Adrenal gland (tissue), 19 donors: ENCODE measurements at regions of chr10 and their contacts with region 1.

Region 1: DNA sequence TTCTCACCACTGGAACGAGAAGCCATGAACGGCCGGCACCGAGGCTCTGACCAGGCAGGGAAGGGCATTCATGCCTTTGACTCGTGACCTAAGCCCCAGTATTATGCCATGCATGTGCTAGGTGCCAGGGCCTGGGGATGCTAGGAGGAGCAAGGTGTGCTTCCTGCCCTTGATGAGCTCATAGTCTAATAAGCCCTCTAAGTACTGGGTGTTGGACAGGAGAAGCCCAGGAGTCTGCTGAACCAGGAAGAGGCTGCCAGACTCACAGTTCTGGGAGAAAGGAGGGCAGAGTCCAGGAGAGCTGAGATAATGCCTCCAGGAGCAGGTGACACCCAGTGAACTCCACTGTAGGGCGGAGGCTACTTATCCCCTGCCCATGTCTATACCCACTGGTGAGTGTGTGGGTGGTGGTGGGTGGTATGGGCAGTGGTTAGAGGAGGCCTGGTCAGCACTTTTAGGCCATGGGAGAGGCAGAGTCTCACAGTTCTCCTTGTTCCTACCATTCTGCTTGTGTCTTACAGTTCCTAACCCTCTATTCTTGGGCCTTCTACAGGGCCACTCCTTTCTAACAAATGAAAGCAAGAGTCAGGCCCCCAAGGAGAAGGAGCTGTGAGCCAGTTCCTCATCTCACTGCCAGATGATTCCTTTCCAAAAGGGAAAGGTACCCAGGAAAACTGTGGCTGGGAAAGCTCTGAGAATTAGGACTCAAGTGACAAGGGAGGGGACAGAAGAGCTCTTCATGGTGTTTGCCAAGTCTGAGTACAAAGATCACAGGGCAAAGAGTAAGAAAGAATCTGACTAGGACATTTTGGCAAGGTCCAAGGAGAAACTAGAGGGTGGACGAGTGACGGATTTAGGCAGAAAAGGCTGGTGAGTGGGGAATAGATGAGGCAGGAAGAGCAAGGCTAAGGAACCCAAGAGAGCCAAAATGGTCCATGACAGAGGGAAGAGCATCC is 3.6 kb upstream of the MXI1 start:
- DNase-seq: peak in 1 of 7 donors; percentile 25
- H3K4me3 ChIP-seq: no peak overlapping the region
- H3K27ac ChIP-seq: no peak overlapping the region
- H3K4me1 ChIP-seq: peaks cover 0 to 4% of the 10 kb centered on the region in 2 donors
- H3K27me3 ChIP-seq: no peaks in the 10 kb centered on the region
- CTCF ChIP-seq: no peak
- POLR2A ChIP-seq: no peak

Region 2: GRCh38 chr10:110151467-110151866 is 52.3 kb before region 1 on chr10:
- intact Hi-C with region 1: loop called in 1 of 2 experiments (anchors 5 kb)
- DNase-seq: no peak
- H3K4me3 ChIP-seq: no peak overlapping the region
- H3K27ac ChIP-seq: no peak overlapping the region
- H3K4me1 ChIP-seq: no peaks in the 10 kb centered on the region
- H3K27me3 ChIP-seq: no peaks in the 10 kb centered on the region
- CTCF ChIP-seq: no peak
- POLR2A ChIP-seq: no peak

Region 3: DNA sequence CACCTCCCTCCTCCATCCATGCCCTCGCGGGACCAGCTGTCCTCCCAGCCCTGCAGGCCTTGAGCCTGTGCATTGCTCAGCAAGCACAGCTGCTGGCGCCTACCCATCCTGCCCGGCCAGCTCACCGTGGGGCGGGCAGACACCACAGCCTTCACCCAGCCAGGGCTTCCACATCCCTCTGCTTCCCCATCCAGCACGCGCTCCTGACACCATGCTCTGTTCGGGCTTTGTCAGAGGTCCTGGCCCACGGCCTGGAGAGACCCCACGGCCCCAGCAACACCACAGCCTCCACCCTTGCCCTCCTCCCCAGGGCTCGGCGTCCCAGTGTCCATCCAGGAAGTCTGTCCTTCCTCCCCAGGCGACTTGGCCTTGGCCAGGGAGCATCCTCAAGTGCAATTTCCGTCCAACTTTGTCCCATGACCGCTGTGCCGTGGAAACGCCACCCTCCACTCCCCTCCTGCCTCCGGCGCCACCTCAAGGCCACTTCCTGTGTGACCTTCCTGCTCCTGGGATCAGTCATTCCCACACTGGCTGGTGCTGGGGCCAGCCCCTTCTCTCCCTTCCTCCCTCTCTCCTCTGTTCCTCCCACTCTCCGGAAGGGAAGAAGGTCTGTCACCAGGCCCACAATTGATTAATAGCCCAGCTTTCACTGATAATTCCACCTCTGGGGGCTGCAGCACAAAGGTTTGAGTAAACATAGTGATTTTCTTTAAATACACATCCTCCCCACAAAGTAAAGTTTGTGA is 172.4 kb after region 1 on chr10:
- intact Hi-C with region 1: no loop called
- DNase-seq: peak; percentile 79 to 90 (median 86)
- H3K4me3 ChIP-seq: peak overlapping the region in 1 of 4 donors; percentile 15
- H3K27ac ChIP-seq: peak overlapping the region; percentile 3 to 89 (median 56)
- H3K4me1 ChIP-seq: peaks cover 9 to 11% of the 10 kb centered on the region in 2 donors
- H3K27me3 ChIP-seq: no peaks in the 10 kb centered on the region
- CTCF ChIP-seq: no peak
- POLR2A ChIP-seq: peak in 1 of 2 donors; percentile 14